ENCODE measurements at regions of chr1 and their contacts with region 1.

Region 1: DNA sequence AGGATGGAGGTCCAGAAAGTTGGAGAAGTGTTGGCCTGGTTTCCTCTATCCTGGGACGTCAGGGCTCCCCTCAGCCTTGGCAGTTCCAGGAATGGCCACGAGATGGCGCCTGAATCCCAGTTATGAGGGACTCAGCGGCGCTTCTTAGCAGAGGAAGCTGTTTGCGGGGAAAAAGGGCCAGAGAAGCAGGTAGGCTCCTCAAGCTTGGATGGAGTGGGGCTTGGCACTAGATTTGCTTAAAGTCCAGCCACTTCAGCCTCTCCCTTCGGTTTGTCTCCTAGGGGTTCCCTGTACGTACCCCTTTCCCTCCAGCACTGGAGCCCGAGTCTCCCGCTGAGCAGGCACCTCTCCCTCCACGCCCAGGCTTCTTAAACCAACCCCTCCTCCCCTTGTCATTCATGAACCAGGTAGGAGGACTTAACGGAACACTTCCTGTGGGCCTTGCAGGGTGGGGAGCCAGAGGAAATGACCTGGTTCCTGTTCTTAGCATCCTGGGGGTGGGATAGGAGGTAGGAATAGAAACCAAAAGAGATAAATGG is 32.0 kb upstream of the TENT5B start:
- DNase-seq: peak; percentile 86 to 95 (median 95)
- ATAC-seq: peak; percentile 89 to 90
- H3K4me3 ChIP-seq: no peak overlapping the region
- H3K27ac ChIP-seq: no peak overlapping the region
- H3K4me1 ChIP-seq: no peaks in the 10 kb centered on the region
- H3K27me3 ChIP-seq: no peaks in the 10 kb centered on the region

Region 2: GRCh38 chr1:26666855-26667254 is 377.8 kb before region 1 on chr1:
- intact Hi-C with region 1: no loop called
- DNase-seq: no peak
- ATAC-seq: no peak
- H3K4me3 ChIP-seq: no peak overlapping the region
- H3K27ac ChIP-seq: no peak overlapping the region
- H3K4me1 ChIP-seq: no peaks in the 10 kb centered on the region
- H3K27me3 ChIP-seq: no peaks in the 10 kb centered on the region

Region 3: DNA sequence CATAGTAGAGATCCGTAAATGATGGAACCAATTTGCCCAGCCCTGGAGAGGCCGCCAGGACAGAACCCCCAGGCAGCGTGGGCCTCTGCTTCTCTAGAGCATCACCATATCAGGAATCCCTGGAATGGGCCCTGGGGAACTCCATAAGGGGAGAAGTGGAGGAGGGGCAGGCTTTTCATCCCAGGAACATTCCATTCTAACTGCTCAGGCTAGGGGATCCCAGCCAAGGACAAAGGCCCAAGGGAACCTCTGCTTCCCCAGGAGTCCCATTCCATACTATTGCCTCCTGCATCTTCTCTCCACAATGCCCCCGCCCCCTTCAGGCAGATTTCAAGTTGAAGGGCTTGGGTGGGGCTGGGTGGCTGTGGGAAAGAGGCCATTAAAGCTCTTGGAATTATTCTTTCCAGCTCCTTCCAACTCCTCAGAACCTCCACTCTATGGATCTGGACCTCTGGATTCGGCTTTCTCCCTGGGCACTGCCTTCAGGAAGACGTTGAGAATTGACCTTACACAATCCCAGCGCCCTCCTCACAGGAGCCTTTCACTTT is 45.2 kb before region 1 on chr1:
- intact Hi-C with region 1: loop called in 2 of 4 experiments (anchors 5 kb)
- DNase-seq: peak; percentile 74 to 87 (median 85)
- ATAC-seq: peak; percentile 70 to 73
- H3K4me3 ChIP-seq: no peak overlapping the region
- H3K27ac ChIP-seq: peak overlapping the region; percentile 94
- H3K4me1 ChIP-seq: peaks cover 20% of the 10 kb centered on the region
- H3K27me3 ChIP-seq: no peaks in the 10 kb centered on the region